Activated CD4-positive, alpha-beta T cell treated with anti-CD3 and anti-CD28 coated beads for 36 hours (primary cell): ENCODE measurements at regions of chr10 and their contacts with region 1.

Region 1: DNA sequence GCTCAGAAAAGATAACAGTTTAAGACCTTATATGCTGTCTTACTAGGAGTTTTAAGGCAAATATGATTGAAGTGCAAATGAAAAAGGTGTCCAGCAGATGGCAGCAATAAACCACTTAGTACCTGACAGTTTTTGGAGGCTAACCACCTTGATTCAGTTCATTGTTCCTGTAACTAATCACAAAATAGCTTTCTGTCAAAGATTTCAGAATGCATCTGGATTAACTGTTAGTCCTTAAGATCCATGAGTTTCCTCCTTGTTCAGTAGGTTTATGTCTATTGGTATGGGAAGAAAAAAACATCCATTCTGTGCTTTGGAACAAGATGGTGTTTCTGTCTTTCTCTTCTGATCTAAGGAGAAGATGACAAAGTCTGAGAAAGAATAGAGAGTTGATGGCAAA is 46.6 kb downstream of the CCSER2 start:
- DNase-seq: peak; percentile 53
- ATAC-seq: peak; percentile 72
- H3K4me3 Mint-ChIP-seq: no peak overlapping the region
- H3K27ac Mint-ChIP-seq: no peak overlapping the region
- H3K4me1 Mint-ChIP-seq: peaks cover 41% of the 10 kb centered on the region
- H3K27me3 Mint-ChIP-seq: no peaks in the 10 kb centered on the region

Region 2: GRCh38 chr10:84424731-84425167 is 49.7 kb after region 1 on chr10:
- CTCF ChIA-PET with region 1: interaction called, 4 read pairs
- POLR2A ChIA-PET with region 1: no interaction called
- intact Hi-C with region 1: loop called in 1 of 2 experiments (anchors 2 kb)
- DNase-seq: peak; percentile 33
- ATAC-seq: peak; percentile 76
- H3K4me3 Mint-ChIP-seq: peak overlapping the region; percentile 9
- H3K27ac Mint-ChIP-seq: peak overlapping the region; percentile 69
- H3K4me1 Mint-ChIP-seq: peaks cover 44% of the 10 kb centered on the region
- H3K27me3 Mint-ChIP-seq: no peaks in the 10 kb centered on the region

Region 3: GRCh38 chr10:84452003-84452402 is 77.0 kb after region 1 on chr10:
- CTCF ChIA-PET with region 1: no interaction called
- POLR2A ChIA-PET with region 1: no interaction called
- intact Hi-C with region 1: no loop called
- DNase-seq: no peak
- ATAC-seq: no peak
- H3K4me3 Mint-ChIP-seq: no peak overlapping the region
- H3K27ac Mint-ChIP-seq: no peak overlapping the region
- H3K4me1 Mint-ChIP-seq: peaks cover 3% of the 10 kb centered on the region
- H3K27me3 Mint-ChIP-seq: no peaks in the 10 kb centered on the region

Region 4: DNA sequence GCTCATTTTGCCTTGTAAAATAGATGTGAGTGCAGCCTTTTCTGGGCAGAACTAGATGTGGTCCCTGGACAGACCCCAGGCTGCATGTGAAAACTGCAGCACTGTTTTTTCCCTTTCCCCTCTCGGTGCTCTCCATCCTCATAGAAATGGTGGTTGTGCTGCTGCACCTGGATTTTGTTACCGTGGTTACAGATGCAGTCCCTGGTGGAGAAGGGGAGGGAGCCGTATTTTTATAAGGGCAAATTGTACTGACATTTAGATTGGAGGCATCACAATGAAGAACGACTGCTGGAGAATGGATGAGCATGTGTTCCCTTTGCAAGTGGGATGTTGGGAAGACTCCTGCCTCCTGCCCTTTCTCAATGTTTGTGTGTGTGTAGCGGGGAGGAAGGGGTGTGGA is 423.3 kb after region 1 on chr10:
- CTCF ChIA-PET with region 1: no interaction called
- POLR2A ChIA-PET with region 1: no interaction called
- intact Hi-C with region 1: no loop called
- DNase-seq: no peak
- ATAC-seq: no peak
- H3K4me3 Mint-ChIP-seq: no peak overlapping the region
- H3K27ac Mint-ChIP-seq: no peak overlapping the region
- H3K4me1 Mint-ChIP-seq: no peaks in the 10 kb centered on the region
- H3K27me3 Mint-ChIP-seq: peaks cover 7% of the 10 kb centered on the region